Activated naive CD4-positive, alpha-beta T cell treated with anti-CD3 and anti-CD28 coated beads for 36 hours (primary cell): ENCODE measurements at regions of chr5 and their contacts with region 1.

Region 1: DNA sequence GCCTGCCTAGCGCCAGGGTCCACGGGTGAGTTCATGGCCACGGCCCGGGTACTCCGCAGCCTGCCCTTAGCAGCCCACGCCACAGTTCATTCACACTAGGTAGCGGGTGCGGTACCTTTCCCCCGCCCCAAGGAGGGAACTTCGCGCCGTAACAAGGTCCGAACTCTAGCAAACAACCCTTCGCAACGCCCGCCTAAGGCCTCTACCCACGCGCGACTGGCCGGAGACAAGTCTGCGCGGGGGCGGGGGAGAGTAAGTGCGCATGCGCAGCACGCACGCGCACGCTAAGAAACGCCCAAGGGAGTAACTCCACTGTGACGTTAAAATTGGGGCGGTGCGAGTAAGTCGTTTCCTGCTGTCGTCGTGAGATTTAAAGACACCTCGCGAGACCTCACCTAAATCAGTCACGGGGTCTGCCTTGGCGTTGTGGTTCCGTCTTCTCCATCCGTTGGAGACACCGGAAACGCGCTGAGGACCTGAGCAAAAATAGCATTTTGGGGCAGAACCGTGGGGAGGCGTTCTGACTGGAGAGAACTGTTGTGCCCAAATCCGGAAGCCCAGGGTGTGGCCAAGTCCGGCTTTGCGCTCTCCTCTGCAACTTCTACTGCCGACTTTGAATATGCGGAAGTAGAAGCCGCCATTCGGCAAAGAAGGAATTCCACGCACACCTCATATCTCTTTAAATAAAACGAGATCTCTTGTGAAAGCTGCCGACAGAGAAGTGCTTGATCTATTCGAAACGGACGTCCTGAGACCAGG is at the start of gene RAPGEF6:
- DNase-seq: peak; percentile 100
- H3K4me3 Mint-ChIP-seq: peak within 1 kb of the TSS; percentile 94
- H3K27ac Mint-ChIP-seq: peak within 1 kb of the TSS; percentile 98
- H3K4me1 Mint-ChIP-seq: peaks cover 26% of the 10 kb centered on the region
- H3K27me3 Mint-ChIP-seq: no peaks in the 10 kb centered on the region
- total RNA-seq, gene RAPGEF6: 34.5 to 37.3 TPM

Region 2: DNA sequence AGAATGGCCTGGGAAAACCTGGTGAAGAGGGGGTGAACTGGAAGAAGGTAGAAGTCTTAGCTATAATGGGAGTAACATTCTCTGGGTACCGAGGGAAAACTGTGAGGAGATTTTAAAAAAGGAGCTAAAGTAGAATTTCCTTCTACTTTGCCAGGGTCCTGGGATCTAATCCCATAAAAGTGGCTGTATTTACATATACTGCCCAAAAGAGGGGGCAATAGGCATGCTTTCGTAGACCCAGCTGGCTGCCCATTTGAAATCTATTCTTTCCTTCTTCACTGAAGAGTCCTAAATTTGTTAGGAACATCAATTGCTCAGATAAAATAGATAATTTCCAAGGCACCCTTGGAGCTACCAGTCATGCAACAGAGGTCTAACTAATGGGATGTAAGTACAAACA is 212.1 kb before region 1 on chr5:
- CTCF ChIA-PET with region 1: no interaction called
- intact Hi-C with region 1: loop called (anchors 2 kb)
- DNase-seq: no peak
- H3K4me3 Mint-ChIP-seq: no peak overlapping the region
- H3K27ac Mint-ChIP-seq: peak overlapping the region; percentile 48
- H3K4me1 Mint-ChIP-seq: peaks cover 12% of the 10 kb centered on the region
- H3K27me3 Mint-ChIP-seq: no peaks in the 10 kb centered on the region

Region 3: DNA sequence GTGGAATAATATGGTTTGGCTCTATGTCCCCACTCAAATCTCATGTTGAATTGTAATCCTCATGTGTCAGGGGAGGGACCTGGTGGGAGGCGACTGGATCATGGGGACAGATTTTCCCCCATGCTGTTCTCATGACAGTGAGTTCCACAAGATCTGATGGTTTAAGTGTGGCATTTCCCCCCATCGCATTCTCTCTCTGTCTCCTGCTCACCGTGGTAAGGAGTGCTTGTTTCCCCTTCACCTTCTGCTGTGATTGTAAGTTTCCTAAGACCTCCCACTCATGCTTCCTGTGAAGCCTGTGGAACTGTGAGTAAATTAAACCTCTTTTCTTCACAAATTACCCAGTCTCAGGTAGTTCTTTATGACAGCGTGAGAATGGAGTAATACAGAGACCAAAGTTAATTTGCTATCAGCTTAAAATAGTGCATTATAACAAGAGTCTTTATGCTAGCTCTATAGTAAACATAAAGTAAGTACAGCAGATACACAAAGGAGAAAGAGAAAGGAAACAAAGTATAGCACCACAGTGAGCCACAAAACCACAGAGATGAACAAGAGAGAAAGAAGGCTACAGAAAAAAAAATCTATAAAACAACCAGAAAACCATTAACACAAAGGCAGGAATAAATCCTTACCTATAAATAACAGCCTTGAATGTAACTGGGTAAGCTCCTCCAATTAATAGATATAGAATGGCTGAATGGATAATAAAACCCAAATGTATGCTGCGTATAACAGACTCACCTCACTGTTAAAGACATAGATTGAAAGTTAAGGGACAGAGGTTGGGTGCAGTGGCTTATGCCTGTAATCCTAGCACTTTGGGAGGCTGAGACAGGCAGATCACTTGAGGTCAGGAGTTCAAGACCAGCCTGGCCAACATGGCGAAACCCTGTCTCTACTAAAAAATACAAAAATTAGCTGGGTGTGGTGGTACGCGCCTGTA is 39.8 kb before region 1 on chr5:
- CTCF ChIA-PET with region 1: interaction called, 32 read pairs
- intact Hi-C with region 1: loop called (anchors 1 kb)
- DNase-seq: peak; percentile 37
- H3K4me3 Mint-ChIP-seq: peak overlapping the region; percentile 48
- H3K27ac Mint-ChIP-seq: peak overlapping the region; percentile 75
- H3K4me1 Mint-ChIP-seq: peaks cover 54% of the 10 kb centered on the region
- H3K27me3 Mint-ChIP-seq: no peaks in the 10 kb centered on the region

Region 4: DNA sequence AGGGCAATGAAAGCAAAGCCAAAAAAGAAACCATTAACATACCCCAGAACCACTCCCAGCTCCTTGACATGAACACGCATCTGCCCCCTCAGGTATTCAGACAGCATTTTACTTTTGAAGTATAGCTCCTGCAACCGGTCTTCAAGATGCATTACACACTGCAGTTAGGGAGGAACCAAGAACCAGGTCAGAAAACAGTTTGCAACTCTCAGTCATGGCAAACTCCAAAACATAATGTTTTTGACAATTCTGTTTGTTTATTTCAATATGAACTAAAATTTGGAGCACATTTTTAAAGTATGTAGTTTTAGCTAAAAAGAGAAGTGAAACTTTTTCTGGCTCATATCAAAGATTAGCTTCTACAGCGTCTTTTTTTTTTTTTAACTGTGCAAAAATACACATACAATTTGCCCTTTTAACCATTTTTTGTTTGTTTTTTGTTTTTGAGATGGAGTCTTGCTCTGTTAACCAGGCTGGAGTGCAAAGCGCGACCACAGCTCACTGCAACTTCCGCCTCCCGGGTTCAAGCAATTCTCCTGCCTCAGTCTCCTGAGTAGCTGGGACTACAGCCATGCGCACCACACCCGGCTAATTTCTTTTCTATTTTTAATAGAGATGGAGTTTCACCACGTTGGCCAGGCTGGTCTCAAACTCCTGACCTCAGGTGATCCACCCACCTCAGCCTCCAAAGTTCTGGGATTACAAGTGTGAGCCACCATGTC is 12.0 kb after region 1 on chr5:
- CTCF ChIA-PET with region 1: no interaction called
- intact Hi-C with region 1: no loop called
- DNase-seq: no peak
- H3K4me3 Mint-ChIP-seq: no peak overlapping the region
- H3K27ac Mint-ChIP-seq: no peak overlapping the region
- H3K4me1 Mint-ChIP-seq: no peaks in the 10 kb centered on the region
- H3K27me3 Mint-ChIP-seq: no peaks in the 10 kb centered on the region

Region 5: GRCh38 chr5:131796793-131797693 is 161.9 kb after region 1 on chr5 and contains the start of gene FNIP1:
- CTCF ChIA-PET with region 1: no interaction called
- intact Hi-C with region 1: loop called (anchors 1 kb)
- DNase-seq: peak; percentile 99
- H3K4me3 Mint-ChIP-seq: peak within 1 kb of the TSS; percentile 97
- H3K27ac Mint-ChIP-seq: peak within 1 kb of the TSS; percentile 78
- H3K4me1 Mint-ChIP-seq: peaks cover 19% of the 10 kb centered on the region
- H3K27me3 Mint-ChIP-seq: no peaks in the 10 kb centered on the region
- total RNA-seq, gene FNIP1: 16.8 to 17.8 TPM

Region 6: DNA sequence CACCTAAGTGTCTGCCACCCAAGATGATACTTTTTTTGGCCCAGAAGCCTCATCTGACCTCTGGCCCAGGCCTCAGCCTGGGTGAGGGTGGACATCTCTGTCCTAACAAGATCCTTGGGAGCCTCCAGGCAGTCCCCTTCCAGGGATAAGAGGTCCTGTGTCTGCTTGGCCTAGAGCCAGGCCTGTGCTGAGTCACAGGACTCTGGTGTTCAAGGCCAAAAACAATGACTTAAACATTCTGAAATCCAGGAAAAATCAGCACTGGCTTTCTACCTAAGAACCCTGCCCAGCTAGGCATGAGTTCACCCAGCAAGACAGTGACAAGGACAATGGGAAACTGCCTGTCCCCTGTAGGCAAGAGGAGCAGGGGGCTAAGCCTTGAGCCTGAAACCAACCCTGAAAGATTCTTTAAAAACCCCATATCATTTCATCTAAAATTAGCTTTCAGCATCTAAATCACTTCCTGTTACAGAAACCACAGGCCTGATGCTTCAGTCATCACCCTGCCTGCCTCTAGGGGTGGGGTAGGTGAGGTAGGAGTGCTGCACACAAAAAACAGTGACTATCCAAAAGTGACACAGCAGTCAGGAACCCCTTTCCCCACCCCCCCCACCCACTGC is 468.3 kb after region 1 on chr5:
- CTCF ChIA-PET with region 1: no interaction called
- intact Hi-C with region 1: loop called (anchors 1 kb)
- DNase-seq: peak; percentile 84
- H3K4me3 Mint-ChIP-seq: no peak overlapping the region
- H3K27ac Mint-ChIP-seq: peak overlapping the region; percentile 73
- H3K4me1 Mint-ChIP-seq: peaks cover 60% of the 10 kb centered on the region
- H3K27me3 Mint-ChIP-seq: no peaks in the 10 kb centered on the region

Region 7: GRCh38 chr5:132556763-132557477 is 921.7 kb after region 1 on chr5 and contains the start of gene RAD50:
- CTCF ChIA-PET with region 1: no interaction called
- intact Hi-C with region 1: loop called (anchors 1 kb)
- DNase-seq: peak; percentile 96
- H3K4me3 Mint-ChIP-seq: peak within 1 kb of the TSS; percentile 98
- H3K27ac Mint-ChIP-seq: peak within 1 kb of the TSS; percentile 94
- H3K4me1 Mint-ChIP-seq: peaks cover 15% of the 10 kb centered on the region
- H3K27me3 Mint-ChIP-seq: no peaks in the 10 kb centered on the region
- total RNA-seq, gene RAD50: 39.1 to 42.4 TPM